Activated CD4-positive, alpha-beta T cell treated with anti-CD3 and anti-CD28 coated beads, Interleukin-2, amount 10 ng/mL, durations not matched to agents 24 days and 14 days (primary cell): ENCODE measurements at regions of chr3 and their contacts with region 1.

Region 1: GRCh38 chr3:9749645-9750555 is at the start of gene OGG1:
- DNase-seq: peak; percentile 99
- H3K4me3 Mint-ChIP-seq: peak within 1 kb of the TSS; percentile 91
- H3K27ac Mint-ChIP-seq: peak within 1 kb of the TSS; percentile 96
- H3K4me1 Mint-ChIP-seq: peaks cover 50% of the 10 kb centered on the region
- H3K27me3 Mint-ChIP-seq: no peaks in the 10 kb centered on the region
- total RNA-seq, gene OGG1: 37.0 and 41.1 TPM in 2 replicates

Region 2: GRCh38 chr3:9715764-9716437 is 34.0 kb before region 1 on chr3:
- intact Hi-C with region 1: no loop called
- DNase-seq: peak; percentile 71
- H3K4me3 Mint-ChIP-seq: no peak overlapping the region
- H3K27ac Mint-ChIP-seq: no peak overlapping the region
- H3K4me1 Mint-ChIP-seq: peaks cover 2% of the 10 kb centered on the region
- H3K27me3 Mint-ChIP-seq: peaks cover 16% of the 10 kb centered on the region

Region 3: DNA sequence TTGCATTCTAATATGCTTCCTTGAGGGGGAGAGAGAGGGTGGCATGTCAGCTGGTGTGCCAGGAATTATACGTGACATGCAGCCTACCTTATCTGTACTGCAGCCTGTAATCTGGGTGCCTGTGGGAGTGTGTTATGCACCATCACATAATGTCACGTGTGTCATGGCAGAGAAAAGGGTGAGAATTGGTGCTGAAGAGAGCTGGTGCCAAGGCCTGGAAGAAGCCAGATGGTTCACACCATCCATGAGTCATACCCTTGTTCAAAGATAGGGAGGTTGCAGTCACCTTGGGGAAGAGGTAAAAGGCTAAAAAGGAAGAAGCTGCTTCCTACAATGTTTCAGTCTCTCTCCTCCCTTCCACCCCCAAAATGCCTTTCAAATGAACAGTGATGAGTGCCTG is 13.1 kb before region 1 on chr3:
- intact Hi-C with region 1: no loop called
- DNase-seq: no peak
- H3K4me3 Mint-ChIP-seq: no peak overlapping the region
- H3K27ac Mint-ChIP-seq: no peak overlapping the region
- H3K4me1 Mint-ChIP-seq: peaks cover 44% of the 10 kb centered on the region
- H3K27me3 Mint-ChIP-seq: no peaks in the 10 kb centered on the region

Region 4: GRCh38 chr3:9769426-9770275 is 19.8 kb after region 1 on chr3 and contains the start of gene CAMK1:
- intact Hi-C with region 1: loop called (anchors 1 kb)
- DNase-seq: peak; percentile 93
- H3K4me3 Mint-ChIP-seq: peak within 1 kb of the TSS; percentile 82
- H3K27ac Mint-ChIP-seq: peak within 1 kb of the TSS; percentile 80
- H3K4me1 Mint-ChIP-seq: peaks cover 43% of the 10 kb centered on the region
- H3K27me3 Mint-ChIP-seq: no peaks in the 10 kb centered on the region
- total RNA-seq, gene CAMK1: 81.0 and 83.7 TPM in 2 replicates

Region 5: GRCh38 chr3:9779721-9780457 is 30.0 kb after region 1 on chr3:
- intact Hi-C with region 1: loop called (anchors 1 kb)
- DNase-seq: peak; percentile 81
- H3K4me3 Mint-ChIP-seq: peak overlapping the region; percentile 59
- H3K27ac Mint-ChIP-seq: peak overlapping the region; percentile 88
- H3K4me1 Mint-ChIP-seq: peaks cover 60% of the 10 kb centered on the region
- H3K27me3 Mint-ChIP-seq: no peaks in the 10 kb centered on the region

Region 6: DNA sequence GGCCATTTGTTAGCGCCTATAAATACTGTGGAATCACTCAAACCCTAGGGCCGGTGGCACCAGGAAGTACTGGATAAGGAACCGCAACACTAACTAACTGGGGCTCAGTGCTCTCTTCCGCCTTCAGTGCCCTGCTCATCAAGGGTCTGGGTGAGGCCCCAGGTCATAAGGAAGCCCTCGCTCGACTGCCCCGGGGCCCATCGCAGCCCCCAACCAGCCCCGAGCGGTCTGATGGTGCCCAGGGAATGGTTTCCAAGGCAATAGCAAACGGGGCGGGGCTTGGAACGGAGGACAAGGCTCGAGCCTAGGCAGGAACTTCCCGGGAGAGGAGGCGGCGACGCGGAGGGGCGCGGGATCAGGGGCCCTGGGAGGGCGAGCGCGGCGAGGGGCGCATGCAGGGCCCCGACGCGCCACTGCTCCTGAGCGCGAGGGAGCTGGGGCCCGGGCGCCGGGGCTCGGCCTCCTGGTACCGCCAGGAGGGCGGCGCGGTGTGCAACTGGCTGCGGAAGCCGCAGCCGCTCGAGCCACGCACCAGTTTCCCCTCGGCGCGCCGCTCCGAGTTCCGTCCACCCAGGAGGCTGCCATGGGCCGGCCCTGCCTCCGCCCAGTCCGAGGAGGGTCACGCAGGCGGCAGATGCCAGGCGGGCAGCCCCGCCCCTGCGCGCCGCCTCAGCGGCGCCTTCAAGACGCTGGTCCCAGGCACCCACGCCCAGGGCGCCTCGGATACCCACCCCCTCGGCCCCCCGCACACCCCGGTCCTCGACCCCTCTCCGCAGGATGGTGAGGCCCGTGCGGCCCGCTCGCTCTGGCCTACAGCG is 59.9 kb after region 1 on chr3 and contains the start of gene TTLL3:
- intact Hi-C with region 1: loop called (anchors 2 kb)
- DNase-seq: peak; percentile 84
- H3K4me3 Mint-ChIP-seq: peak within 1 kb of the TSS; percentile 82
- H3K27ac Mint-ChIP-seq: peak within 1 kb of the TSS; percentile 92
- H3K4me1 Mint-ChIP-seq: peaks cover 37% of the 10 kb centered on the region
- H3K27me3 Mint-ChIP-seq: no peaks in the 10 kb centered on the region
- total RNA-seq, gene TTLL3: 33.2 and 37.7 TPM in 2 replicates